Esophagus muscularis mucosa (tissue), 4 donors: ENCODE measurements at regions of chr5 and their contacts with region 1.

Region 1: GRCh38 chr5:159156426-159157238 is 52.7 kb downstream of the RNF145 start:
- DNase-seq: no peak
- H3K4me3 ChIP-seq: no peak overlapping the region
- H3K27ac ChIP-seq: no peak overlapping the region
- H3K4me1 ChIP-seq: peaks cover 0 to 5% (median 1%) of the 10 kb centered on the region in 4 donors
- H3K27me3 ChIP-seq: no peaks in the 10 kb centered on the region
- CTCF ChIP-seq: peak; percentile 80 to 88 (median 80)
- EP300 ChIP-seq: no peak
- POLR2A ChIP-seq: no peak

Region 2: GRCh38 chr5:158670201-158670600 is 486.4 kb before region 1 on chr5:
- intact Hi-C with region 1: no loop called
- DNase-seq: no peak
- H3K4me3 ChIP-seq: no peak overlapping the region
- H3K27ac ChIP-seq: no peak overlapping the region
- H3K4me1 ChIP-seq: no peaks in the 10 kb centered on the region
- H3K27me3 ChIP-seq: no peaks in the 10 kb centered on the region
- CTCF ChIP-seq: no peak
- EP300 ChIP-seq: no peak
- POLR2A ChIP-seq: no peak

Region 3: GRCh38 chr5:159209438-159210305 is 53.0 kb after region 1 on chr5 and contains the start of gene RNF145:
- intact Hi-C with region 1: loop called (anchors 1 kb)
- DNase-seq: peak; percentile 95
- H3K4me3 ChIP-seq: peak within 1 kb of the TSS; percentile 96 to 99 (median 98)
- H3K27ac ChIP-seq: peak within 1 kb of the TSS; percentile 94 to 98 (median 96)
- H3K4me1 ChIP-seq: peaks cover 30 to 36% (median 35%) of the 10 kb centered on the region in 4 donors
- H3K27me3 ChIP-seq: no peaks in the 10 kb centered on the region
- CTCF ChIP-seq: no peak
- EP300 ChIP-seq: no peak
- POLR2A ChIP-seq: no peak
- total RNA-seq, gene RNF145: 50.5 to 84.1 (median 63.9) TPM

Region 4: GRCh38 chr5:159262859-159263567 is 106.4 kb after region 1 on chr5 and contains the start of gene UBLCP1:
- intact Hi-C with region 1: loop called (anchors 2 kb)
- DNase-seq: peak; percentile 94
- H3K4me3 ChIP-seq: peak within 1 kb of the TSS; percentile 79 to 98 (median 94)
- H3K27ac ChIP-seq: peak within 1 kb of the TSS; percentile 86 to 93 (median 88)
- H3K4me1 ChIP-seq: peaks cover 10 to 34% (median 23%) of the 10 kb centered on the region in 4 donors
- H3K27me3 ChIP-seq: no peaks in the 10 kb centered on the region
- CTCF ChIP-seq: no peak
- EP300 ChIP-seq: no peak
- POLR2A ChIP-seq: no peak
- total RNA-seq, gene UBLCP1: 17.5 to 22.8 (median 21.1) TPM